GM18951 (cell line): ENCODE measurements at regions of chr2 and their contacts with region 1.

Region 1: DNA sequence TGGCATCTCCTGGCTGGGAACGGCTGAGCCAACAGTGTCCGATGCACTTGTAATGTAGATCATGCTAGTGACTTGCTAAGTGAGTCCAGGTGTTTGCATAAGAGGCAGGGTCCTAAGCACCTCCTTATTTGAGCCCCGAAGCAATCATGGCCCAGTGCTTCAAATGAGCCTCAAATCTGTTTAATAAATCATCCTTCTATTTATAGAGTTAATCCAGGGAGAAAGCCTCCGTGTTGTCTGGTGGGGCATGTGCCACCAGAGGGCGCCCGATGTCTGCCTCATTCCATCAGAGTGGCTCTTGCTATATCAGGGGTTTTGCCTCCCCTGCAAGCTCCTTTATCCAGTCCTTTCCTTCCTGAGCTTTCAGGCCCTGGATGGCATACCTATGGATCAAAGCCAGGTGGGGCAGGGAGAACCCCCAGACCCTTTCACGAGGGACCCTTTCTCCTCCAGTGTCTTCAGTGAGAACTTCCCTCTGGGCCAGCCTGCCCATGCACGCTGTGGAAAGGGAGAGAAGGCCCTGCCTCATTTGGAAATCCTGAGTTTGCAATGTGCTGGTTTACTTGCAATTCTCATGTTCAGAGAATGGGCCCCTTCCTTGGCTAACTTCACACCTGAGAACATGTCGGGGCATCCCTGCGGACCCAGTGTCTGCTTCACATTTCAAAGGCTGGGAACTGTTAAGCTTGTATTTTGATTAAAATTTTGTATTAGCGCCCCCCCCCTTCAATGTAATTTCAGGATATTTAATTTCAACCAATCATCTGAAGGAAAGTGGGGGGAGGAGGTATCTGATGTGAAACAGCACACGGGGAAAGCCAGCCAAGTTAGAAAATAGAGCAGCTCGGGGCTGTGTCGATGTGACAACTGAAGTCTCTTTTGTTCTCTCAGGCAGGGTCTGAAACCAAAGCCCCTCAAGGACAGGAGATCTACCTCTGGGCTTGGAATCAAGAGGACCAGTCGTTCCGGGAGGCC is 39.7 kb downstream of the RDH14 start:
- POLR2A ChIP-seq: no peak

Region 2: GRCh38 chr2:19362755-19363473 is 842.2 kb after region 1 on chr2:
- in situ Hi-C with region 1: loop called (anchors 25 kb)
- POLR2A ChIP-seq: no peak

Region 3: GRCh38 chr2:19746611-19747309 is 1226.0 kb after region 1 on chr2:
- in situ Hi-C with region 1: loop called (anchors 25 kb)
- POLR2A ChIP-seq: no peak

Region 4: DNA sequence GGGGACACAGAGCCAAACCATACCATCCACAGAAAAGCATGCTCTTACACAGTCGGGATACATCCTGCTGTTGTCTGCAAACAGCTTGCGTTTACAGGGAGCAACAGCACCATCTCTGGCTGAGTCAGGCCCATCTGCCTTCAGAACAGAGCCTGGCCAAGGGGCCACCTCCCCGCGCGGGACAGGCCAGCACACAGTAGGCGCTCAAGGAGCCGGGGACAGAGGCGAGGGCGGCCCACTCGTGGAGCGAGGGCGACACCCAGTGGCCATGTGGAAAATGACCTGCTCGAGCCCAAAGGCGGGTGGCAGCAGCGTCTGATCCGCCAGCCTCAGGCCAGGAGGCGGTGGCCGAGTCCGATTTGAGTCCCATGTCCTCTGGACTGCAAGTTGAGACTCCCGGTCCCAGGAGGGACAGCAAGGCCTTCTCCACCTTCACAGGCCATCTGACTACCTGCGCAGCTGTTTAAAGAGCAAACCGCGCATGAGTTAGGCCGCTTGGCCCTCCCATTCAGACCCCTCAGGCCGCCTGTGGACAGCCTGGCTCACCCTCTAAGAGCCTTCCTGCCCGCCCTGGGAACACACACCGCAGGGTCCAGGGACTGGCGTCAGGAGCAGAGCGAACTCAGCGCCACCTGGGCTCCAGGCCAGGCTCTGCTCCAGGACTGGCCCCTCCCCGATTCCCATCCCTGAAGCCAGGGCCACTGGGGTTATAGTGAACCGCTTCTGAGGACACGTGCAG is 1342.7 kb after region 1 on chr2:
- in situ Hi-C with region 1: loop called (anchors 25 kb)
- POLR2A ChIP-seq: no peak